Left ventricle myocardium superior (tissue), 1 donor: ENCODE measurements at regions of chr11 and their contacts with region 1.

Region 1: GRCh38 chr11:111601979-111602864 is at the start of gene SIK2:
- DNase-seq: peak; percentile 97
- ATAC-seq: peak; percentile 94
- total RNA-seq, gene SIK2: 17.8 TPM

Region 2: GRCh38 chr11:111777094-111778046 is 175.1 kb after region 1 on chr11:
- intact Hi-C with region 1: loop called (anchors 2 kb)
- DNase-seq: no peak
- ATAC-seq: peak; percentile 82

Region 3: DNA sequence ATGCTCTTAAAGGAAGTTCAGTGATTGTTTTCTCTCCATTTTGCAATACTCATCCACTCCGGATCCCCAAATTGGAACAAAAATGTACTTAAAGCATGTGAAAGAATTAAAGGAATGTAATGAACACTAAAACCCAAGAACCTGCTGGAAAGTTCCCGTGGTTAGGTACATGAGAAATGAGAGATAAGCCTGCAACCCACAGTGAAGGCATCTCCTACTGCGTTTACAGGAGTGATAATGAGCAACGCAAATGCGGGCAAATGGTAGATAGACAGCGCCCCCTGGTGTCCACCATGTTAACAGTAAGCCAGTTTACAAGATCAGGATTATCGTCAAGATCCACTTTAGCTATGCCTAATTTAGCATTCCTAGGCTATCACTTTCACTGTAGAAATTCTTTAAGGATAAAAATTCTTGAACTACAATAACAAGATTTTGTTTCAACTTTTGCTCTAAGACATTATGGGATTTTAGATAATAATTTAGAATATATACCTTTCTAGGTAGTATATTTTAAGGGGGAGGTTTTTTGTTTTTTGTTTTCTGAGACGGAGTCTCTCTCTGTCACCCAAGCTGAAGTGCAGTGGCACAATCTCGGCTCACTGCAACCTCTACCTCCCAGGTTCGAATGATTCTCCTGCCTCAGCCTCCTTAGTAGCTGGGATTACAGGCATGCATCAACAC is 239.3 kb after region 1 on chr11:
- intact Hi-C with region 1: loop called (anchors 5 kb)
- DNase-seq: peak; percentile 90
- ATAC-seq: peak; percentile 89